Mammary epithelial cell (primary cell): ENCODE measurements at regions of chr1 and their contacts with region 1.

Region 1: GRCh38 chr1:220013497-220013896 is 32.8 kb downstream of the EPRS1 start:
- DNase-seq: no peak
- H3K4me3 ChIP-seq: no peak overlapping the region
- H3K27ac ChIP-seq: no peak overlapping the region
- H3K4me1 ChIP-seq: no peaks in the 10 kb centered on the region
- H3K27me3 ChIP-seq: no peaks in the 10 kb centered on the region
- CTCF ChIP-seq: no peak

Region 2: DNA sequence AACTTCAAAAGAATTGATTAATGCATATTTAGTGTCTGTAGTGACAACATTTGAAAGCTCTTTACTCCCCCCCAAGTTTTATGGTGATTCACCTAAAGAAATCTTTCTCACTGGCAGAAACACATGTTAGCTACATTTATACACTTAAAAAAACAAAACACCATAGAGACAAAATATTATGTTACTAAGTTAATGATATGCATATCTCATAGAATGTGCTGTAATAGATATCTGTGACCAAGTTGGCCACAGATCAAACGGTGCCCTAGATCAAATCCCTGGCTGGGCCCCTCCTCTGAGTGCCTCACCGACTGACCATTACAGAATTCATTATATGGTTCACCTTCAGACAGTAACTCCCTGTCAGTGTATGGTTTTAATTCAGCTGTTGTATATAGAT is 1161.9 kb before region 1 on chr1:
- CTCF ChIA-PET with region 1: no interaction called
- dilution Hi-C with region 1: no loop called
- in situ Hi-C with region 1: no loop called
- intact Hi-C with region 1: no loop called
- DNase-seq: no peak
- H3K4me3 ChIP-seq: no peak overlapping the region
- H3K27ac ChIP-seq: no peak overlapping the region
- H3K4me1 ChIP-seq: no peaks in the 10 kb centered on the region
- H3K27me3 ChIP-seq: no peaks in the 10 kb centered on the region
- CTCF ChIP-seq: no peak

Region 3: GRCh38 chr1:219900201-219900600 is 113.3 kb before region 1 on chr1:
- CTCF ChIA-PET with region 1: no interaction called
- dilution Hi-C with region 1: no loop called
- in situ Hi-C with region 1: no loop called
- intact Hi-C with region 1: no loop called
- DNase-seq: no peak
- H3K4me3 ChIP-seq: no peak overlapping the region
- H3K27ac ChIP-seq: no peak overlapping the region
- H3K4me1 ChIP-seq: no peaks in the 10 kb centered on the region
- H3K27me3 ChIP-seq: peaks cover 3% of the 10 kb centered on the region
- CTCF ChIP-seq: no peak

Region 4: DNA sequence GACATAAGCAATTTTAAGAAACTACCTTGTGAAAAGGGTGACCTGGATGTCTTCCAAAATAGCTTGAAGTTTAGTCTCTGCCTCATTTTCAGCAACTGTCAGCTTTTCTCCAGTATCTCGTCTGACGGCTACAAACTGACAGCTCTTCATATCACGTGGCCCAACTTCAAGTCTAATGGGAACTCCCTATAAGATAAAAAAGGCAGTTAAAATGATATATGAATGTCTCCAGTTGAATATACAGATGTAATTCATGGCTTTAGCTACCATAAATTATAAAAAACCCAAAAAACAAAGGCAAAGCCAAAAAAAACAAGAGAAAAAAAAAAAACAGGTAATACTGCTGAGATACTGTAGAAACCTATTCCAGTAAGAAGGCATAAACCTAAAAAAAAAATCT is 40.3 kb before region 1 on chr1:
- CTCF ChIA-PET with region 1: no interaction called
- dilution Hi-C with region 1: no loop called
- in situ Hi-C with region 1: no loop called
- intact Hi-C with region 1: loop called (anchors 5 kb)
- DNase-seq: no peak
- H3K4me3 ChIP-seq: no peak overlapping the region
- H3K27ac ChIP-seq: no peak overlapping the region
- H3K4me1 ChIP-seq: no peaks in the 10 kb centered on the region
- H3K27me3 ChIP-seq: no peaks in the 10 kb centered on the region
- CTCF ChIP-seq: no peak

Region 5: GRCh38 chr1:220113136-220113695 is 99.7 kb after region 1 on chr1:
- CTCF ChIA-PET with region 1: no interaction called
- dilution Hi-C with region 1: no loop called
- in situ Hi-C with region 1: loop called in 1 of 2 experiments (anchors 25 kb)
- intact Hi-C with region 1: no loop called
- DNase-seq: peak; percentile 3
- H3K4me3 ChIP-seq: no peak overlapping the region
- H3K27ac ChIP-seq: no peak overlapping the region
- H3K4me1 ChIP-seq: no peaks in the 10 kb centered on the region
- H3K27me3 ChIP-seq: no peaks in the 10 kb centered on the region
- CTCF ChIP-seq: peak; percentile 48 to 53